Left cardiac atrium (tissue), 4 donors: ENCODE measurements at regions of chr14 and their contacts with region 1.

Region 1: DNA sequence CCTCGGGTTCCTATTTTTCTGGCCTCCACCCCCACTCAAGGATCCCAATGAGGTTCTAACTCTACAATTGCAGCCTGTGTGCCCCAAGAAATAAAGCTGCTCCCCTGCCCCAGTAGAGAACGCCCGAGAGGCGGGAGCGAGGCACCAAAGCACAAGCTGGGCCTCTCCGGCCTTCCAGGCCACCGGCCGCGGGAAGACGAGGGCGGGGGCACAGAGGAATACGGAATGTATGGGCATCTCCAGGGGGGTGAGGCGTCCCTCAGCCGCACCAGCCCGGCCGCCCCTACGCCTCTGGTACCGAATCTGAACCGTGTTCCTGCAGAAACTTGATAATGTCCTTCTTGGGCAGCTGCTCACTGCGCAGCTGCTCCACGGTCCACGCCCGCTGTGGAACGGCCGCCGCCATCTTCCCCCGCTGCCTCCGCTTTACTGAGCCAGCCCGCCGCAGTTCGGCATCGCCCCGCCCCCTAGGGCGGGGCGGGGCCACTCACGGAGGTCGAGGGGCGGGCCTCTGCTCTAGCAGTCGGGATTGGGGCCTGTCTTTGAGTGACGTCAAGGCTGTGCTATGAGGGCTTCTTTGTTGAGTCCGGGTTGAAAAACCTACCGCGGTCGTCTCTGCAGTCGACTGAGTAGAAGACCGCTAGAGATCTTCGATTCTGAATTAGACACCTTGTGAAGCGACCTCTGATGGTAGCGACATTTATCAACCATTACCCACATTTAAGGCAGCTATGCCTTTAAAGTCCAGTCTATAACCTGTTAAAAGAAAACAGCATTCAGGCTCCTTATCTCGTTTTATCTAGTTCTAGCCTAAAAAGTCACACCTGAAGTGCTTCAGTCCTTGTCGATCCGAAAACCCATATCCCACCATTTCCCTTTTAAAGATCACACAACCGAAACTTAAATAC is at the start of gene FKBP3:
- DNase-seq: peak; percentile 97
- ATAC-seq: peak; percentile 99
- total RNA-seq, gene FKBP3: 76.0 to 78.9 TPM

Region 2: GRCh38 chr14:44897045-44897844 is 237.1 kb before region 1 on chr14:
- intact Hi-C with region 1: loop called in 1 of 2 experiments (anchors 5 kb)
- DNase-seq: peak; percentile 99
- ATAC-seq: peak; percentile 98 to 99

Region 3: GRCh38 chr14:44961604-44962333 is 172.5 kb before region 1 on chr14 and contains the starts of genes KLHL28 and TOGARAM1:
- intact Hi-C with region 1: loop called in 1 of 2 experiments (anchors 5 kb)
- DNase-seq: peak; percentile 97
- ATAC-seq: peak; percentile 96
- total RNA-seq, gene KLHL28: 10.5 to 10.9 TPM
- total RNA-seq, gene TOGARAM1: 14.8 to 18.6 TPM

Region 4: DNA sequence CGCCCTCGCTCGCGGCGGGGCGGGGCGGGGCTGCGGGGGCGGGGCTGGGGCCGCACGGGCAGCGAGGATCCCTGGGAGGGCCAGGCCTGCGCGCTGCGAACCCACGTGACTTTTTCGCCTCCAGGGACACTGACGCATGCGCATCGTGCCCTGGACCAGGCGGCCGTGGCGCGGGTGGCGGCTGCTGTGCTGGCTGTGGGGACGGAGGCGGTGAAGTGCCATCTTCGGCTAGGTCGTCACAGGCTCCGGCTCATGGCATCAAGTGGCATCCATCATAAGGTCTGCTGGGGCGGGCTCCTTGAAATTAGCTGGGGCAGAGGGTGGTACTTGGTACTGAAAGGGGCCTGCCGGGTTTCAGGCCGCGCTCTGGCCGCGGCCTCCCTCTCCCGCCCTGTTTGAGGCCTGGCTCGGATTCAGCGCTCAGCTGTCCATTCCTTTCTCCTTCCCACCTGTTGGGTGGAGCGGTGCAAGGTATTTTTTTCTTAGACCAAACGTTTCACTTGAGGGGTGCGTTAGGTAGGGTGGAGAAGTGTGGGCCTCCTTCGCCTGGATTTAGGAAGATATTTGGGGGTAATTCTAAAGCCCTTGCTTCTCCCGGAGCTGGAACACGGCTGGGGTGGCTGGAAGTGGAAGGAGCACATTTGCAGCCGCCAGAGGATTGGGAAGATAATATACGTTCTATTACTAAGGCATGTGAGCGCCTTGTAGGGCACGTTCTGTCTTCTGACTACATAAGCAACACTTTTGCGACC is 50.2 kb before region 1 on chr14 and contains the start of gene PRPF39:
- intact Hi-C with region 1: loop called in 1 of 2 experiments (anchors 2 kb)
- DNase-seq: peak; percentile 96
- ATAC-seq: peak; percentile 99
- total RNA-seq, gene PRPF39: 12.8 to 19.5 TPM